MCF 10A (cell line): ENCODE measurements at regions of chr1 and their contacts with region 1.

Region 1: DNA sequence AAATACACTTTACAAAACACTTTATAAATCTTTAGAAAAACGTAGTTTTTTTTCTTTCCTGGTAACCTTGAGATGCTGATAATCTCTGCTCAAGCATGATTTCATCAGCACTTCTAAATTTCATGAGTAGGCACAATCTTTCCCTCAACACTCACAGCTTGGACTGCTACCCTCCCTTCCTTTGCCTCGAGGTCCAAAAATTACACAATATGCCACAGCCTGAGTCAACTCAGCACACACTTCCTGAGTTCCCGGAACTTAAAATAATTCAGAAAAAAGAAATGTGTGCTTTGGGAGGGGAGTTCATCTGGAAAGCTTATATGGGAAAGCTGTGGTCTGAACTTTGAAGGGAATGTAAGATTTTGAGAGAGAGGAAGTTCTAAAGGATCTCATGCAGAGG is 5.9 kb downstream of the CLCA2 start:
- DNase-seq: peak; percentile 96
- H3K4me3 Mint-ChIP-seq: no peak overlapping the region
- H3K27ac Mint-ChIP-seq: no peak overlapping the region
- H3K4me1 Mint-ChIP-seq: peaks cover 13% of the 10 kb centered on the region
- H3K27me3 Mint-ChIP-seq: no peaks in the 10 kb centered on the region
- CTCF ChIP-seq: no peak

Region 2: DNA sequence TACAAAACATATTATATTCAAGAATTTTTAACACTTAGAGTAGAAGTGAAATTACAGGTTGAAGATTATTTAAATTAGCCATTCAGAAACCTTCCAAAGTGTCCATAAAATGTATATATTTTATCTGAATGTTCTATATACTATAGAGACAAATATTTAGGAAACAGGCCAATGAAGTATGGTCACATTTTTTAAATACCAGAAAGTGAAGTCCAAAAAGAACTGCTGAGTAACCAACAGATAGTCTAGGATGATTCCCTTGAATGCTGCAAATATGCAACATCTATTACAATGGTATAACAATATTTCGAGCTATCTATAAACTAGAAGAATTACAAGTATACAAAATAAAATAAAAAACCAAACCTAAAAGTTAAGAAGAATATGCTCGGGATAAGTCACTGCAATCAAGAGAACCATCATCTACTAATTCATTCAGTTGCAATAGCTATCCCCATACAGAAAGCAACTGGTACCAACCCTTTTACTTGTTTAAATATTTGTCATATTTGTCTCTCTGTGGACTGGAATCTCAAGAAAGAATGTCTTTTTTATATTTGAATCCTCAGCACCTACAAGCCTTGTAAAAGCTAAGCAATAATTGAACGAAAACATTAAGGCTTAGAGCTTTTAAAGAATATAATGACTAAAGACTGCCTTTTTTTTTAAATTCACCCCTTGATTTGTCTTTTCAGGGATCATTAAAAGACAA is 41.8 kb before region 1 on chr1:
- CTCF ChIA-PET with region 1: interaction called, 3 read pairs
- POLR2A ChIA-PET with region 1: interaction called, 126 read pairs
- intact Hi-C with region 1: no loop called
- DNase-seq: no peak
- H3K4me3 Mint-ChIP-seq: no peak overlapping the region
- H3K27ac Mint-ChIP-seq: no peak overlapping the region
- H3K4me1 Mint-ChIP-seq: peaks cover 9% of the 10 kb centered on the region
- H3K27me3 Mint-ChIP-seq: no peaks in the 10 kb centered on the region
- CTCF ChIP-seq: no peak

Region 3: GRCh38 chr1:86395771-86396497 is 33.9 kb before region 1 on chr1 and contains the start of gene ODF2L:
- CTCF ChIA-PET with region 1: interaction called, 3 read pairs
- POLR2A ChIA-PET with region 1: interaction called, 126 read pairs
- intact Hi-C with region 1: no loop called
- DNase-seq: peak; percentile 90
- H3K4me3 Mint-ChIP-seq: peak within 1 kb of the TSS; percentile 94
- H3K27ac Mint-ChIP-seq: peak within 1 kb of the TSS; percentile 98
- H3K4me1 Mint-ChIP-seq: peaks cover 13% of the 10 kb centered on the region
- H3K27me3 Mint-ChIP-seq: no peaks in the 10 kb centered on the region
- CTCF ChIP-seq: no peak
- total RNA-seq, gene ODF2L: 35.5 and 39.0 TPM in 2 replicates

Region 4: GRCh38 chr1:86950712-86951419 is 521.0 kb after region 1 on chr1:
- CTCF ChIA-PET with region 1: no interaction called
- POLR2A ChIA-PET with region 1: no interaction called
- intact Hi-C with region 1: no loop called
- DNase-seq: no peak
- H3K4me3 Mint-ChIP-seq: no peak overlapping the region
- H3K27ac Mint-ChIP-seq: no peak overlapping the region
- H3K4me1 Mint-ChIP-seq: no peaks in the 10 kb centered on the region
- H3K27me3 Mint-ChIP-seq: no peaks in the 10 kb centered on the region
- CTCF ChIP-seq: no peak